Left lung (tissue), 14 donors: ENCODE measurements at regions of chr6 and their contacts with region 1.

Region 1: GRCh38 chr6:150417899-150418826 is 49.4 kb downstream of the IYD start:
- DNase-seq: peak in 2 of 4 donors; percentile 69 to 84
- ATAC-seq: peak; percentile 95
- H3K4me3 ChIP-seq: peak overlapping the region; percentile 19 to 23
- H3K27ac ChIP-seq: peak overlapping the region; percentile 74 to 76
- H3K4me1 ChIP-seq: peaks cover 3 to 12% of the 10 kb centered on the region in 2 donors
- H3K27me3 ChIP-seq: no peaks in the 10 kb centered on the region
- CTCF ChIP-seq: peak; percentile 55 to 67

Region 2: GRCh38 chr6:150666071-150666470 is 247.9 kb after region 1 on chr6:
- intact Hi-C with region 1: no loop called
- DNase-seq: peak in 2 of 4 donors; percentile 53 to 56
- ATAC-seq: peak; percentile 11
- H3K4me3 ChIP-seq: no peak overlapping the region
- H3K27ac ChIP-seq: peak overlapping the region in 1 of 2 donors; percentile 20
- H3K4me1 ChIP-seq: peaks cover 11 to 14% of the 10 kb centered on the region in 2 donors
- H3K27me3 ChIP-seq: no peaks in the 10 kb centered on the region
- CTCF ChIP-seq: no peak

Region 3: DNA sequence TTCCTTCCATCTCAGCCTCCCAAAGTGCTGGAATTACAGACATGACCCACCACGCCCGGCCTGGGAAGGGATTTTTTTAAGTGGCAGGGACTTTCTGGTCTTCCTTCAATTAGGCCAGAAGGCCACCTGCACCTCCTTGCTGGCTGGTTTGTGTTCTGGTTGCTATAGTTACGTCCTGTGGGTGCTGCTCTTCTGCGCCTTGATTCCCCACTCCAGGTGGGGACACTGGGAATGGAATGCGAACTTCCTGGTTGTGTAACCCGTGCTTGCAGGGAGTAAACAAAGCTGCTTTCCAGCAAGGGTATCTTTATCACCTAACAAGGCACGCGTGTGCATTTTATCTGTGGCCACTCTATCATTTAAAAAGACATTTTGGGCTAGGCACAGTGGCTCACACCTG is 299.3 kb after region 1 on chr6:
- intact Hi-C with region 1: no loop called
- DNase-seq: peak in 2 of 4 donors; percentile 66 to 72
- ATAC-seq: peak; percentile 86
- H3K4me3 ChIP-seq: no peak overlapping the region
- H3K27ac ChIP-seq: no peak overlapping the region
- H3K4me1 ChIP-seq: peaks cover 0 to 13% of the 10 kb centered on the region in 2 donors
- H3K27me3 ChIP-seq: no peaks in the 10 kb centered on the region
- CTCF ChIP-seq: no peak

Region 4: GRCh38 chr6:150813319-150813992 is 395.3 kb after region 1 on chr6:
- intact Hi-C with region 1: loop called (anchors 5 to 10 kb)
- DNase-seq: peak in 1 of 4 donors; percentile 71
- ATAC-seq: peak; percentile 33
- H3K4me3 ChIP-seq: no peak overlapping the region
- H3K27ac ChIP-seq: peak overlapping the region; percentile 42 to 43
- H3K4me1 ChIP-seq: peaks cover 6 to 20% of the 10 kb centered on the region in 2 donors
- H3K27me3 ChIP-seq: no peaks in the 10 kb centered on the region
- CTCF ChIP-seq: no peak

Region 5: DNA sequence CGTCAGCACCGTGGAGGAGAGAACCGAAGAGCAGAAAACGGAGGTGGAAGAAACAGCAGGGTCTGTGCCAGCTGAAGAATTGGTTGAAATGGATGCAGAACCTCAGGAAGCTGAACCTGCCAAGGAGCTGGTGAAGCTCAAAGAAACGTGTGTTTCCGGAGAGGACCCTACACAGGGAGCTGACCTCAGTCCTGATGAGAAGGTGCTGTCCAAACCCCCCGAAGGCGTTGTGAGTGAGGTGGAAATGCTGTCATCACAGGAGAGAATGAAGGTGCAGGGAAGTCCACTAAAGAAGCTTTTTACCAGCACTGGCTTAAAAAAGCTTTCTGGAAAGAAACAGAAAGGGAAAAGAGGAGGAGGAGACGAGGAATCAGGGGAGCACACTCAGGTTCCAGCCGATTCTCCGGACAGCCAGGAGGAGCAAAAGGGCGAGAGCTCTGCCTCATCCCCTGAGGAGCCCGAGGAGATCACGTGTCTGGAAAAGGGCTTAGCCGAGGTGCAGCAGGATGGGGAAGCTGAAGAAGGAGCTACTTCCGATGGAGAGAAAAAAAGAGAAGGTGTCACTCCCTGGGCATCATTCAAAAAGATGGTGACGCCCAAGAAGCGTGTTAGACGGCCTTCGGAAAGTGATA is 931.6 kb after region 1 on chr6:
- intact Hi-C with region 1: loop called in 1 of 2 experiments (anchors 10 kb)
- DNase-seq: no peak
- ATAC-seq: no peak
- H3K4me3 ChIP-seq: no peak overlapping the region
- H3K27ac ChIP-seq: no peak overlapping the region
- H3K4me1 ChIP-seq: no peaks in the 10 kb centered on the region
- H3K27me3 ChIP-seq: no peaks in the 10 kb centered on the region
- CTCF ChIP-seq: no peak